GM10248 (cell line): ENCODE measurements at regions of chr9 and their contacts with region 1.

Region 1: DNA sequence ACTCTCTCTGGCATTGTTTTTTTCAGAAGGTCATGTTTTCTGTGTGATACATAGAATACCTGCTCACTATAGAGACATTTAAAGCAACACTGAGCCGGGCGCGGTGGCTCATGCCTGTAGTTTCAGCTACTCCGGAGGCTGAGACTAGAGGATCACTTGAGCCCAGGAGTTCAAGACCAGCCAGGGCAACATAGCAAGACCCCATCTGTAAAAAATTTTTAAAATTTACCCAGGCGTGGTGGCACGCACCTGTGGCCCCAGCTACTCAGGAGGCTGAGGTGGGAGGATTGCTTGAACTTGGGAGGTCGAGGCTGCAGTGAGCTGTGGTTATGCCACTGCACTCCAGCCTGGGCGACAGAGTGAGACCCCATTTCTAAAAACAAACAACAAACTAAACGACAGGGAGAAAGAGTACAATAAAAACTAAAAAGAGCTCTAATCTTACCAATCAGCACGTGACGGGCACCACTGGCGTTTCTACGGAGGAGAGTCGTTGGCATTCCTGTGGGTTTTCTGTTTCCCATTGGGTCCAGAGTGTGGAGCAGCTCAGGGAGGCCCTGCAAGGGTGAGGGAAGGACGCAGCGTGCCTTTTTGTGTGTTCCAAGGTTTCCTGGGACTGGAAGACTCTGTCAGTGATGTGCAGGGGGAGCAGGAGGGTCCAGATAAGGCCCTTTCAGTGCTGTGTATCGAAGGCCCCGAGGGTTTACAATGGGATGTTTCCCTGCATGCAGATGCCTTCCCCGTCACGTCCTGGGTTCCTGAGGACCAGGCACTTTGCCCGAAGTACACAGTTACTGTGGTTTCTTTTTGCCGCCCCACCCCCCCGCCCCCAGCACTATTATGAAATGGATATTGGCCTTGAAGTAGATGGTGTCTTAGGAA is 7.2 kb upstream of the RNU6ATAC start:
- DNase-seq: no peak
- CTCF ChIP-seq: no peak

Region 2: DNA sequence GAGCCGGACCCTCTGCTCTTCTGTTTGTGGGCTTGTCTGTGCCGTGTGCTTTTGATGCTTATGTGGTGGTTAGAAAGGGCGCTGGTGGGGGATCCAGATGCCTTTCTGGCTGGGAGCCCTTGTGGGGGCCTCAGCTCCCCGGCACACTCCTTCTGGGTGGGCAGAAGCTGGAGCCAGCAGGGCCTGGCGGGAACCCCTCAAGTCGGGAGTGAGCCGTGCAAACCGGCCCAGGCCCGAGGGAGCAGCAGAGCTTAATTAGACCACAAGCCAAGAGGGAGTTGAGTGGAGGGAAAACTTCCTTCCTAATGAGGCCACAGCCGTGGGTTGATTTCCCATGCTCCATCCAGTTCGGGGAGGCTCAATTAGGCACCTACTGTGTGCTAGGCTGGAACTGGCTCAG is 68.8 kb after region 1 on chr9:
- CTCF ChIA-PET with region 1: no interaction called
- POLR2A ChIA-PET with region 1: no interaction called
- DNase-seq: no peak
- CTCF ChIP-seq: no peak

Region 3: DNA sequence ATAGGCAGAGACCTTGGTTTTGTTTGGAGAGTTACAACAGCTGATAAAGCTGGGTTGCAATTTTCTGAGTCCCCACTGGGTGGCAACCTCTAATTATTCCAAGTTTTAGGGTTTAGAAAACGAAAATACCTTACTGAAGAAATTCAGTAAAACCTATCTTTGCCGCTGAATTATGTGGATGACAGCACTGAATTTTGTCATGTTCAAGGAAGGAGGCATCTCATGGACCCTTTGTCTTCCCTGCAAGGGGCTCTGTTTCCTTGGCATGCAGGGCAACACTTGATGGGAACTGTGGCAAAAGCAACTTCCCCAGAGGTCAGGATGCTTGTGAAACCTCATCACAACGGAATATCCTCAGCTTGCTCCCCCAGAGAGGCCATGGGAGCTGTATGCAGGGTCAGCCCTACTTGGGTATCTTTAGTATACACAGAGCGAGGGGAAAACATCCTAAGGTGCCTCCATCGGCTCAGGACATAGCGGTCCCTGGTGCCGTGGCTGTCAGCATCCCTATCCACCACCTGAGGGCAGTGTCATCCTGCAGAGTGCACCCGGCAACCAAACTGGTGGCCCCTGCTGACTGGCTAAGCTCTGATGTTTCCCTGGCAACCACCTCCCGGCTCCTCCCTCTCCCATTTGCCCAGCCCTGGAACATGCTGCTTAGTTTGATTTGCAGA is 277.8 kb after region 1 on chr9:
- CTCF ChIA-PET with region 1: interaction called, 10 read pairs
- POLR2A ChIA-PET with region 1: no interaction called
- DNase-seq: peak; percentile 92
- CTCF ChIP-seq: peak; percentile 83